Mammary epithelial cell (primary cell): ENCODE measurements at regions of chr14 and their contacts with region 1.

Region 1: DNA sequence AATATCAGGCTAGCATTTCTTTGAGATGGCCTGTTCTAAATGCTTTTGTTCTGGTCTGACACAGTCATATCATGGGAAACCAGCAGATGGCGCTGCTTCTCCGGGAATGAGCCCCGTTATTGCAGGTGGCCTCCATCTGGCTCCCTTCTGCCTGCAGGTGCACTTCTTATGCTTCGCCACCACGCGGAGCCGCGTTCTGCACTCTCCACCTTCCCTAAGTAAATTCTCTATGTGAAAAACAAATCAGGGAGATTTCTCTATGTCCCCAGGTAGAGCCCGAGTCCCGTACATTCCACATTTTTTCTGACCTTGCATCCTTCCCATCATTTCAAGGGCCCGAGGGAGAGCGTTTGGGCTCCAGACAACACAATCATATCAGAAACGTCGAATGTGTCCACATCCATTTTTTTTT is 26.2 kb downstream of the GLRX5 start:
- DNase-seq: peak; percentile 73
- H3K4me3 ChIP-seq: no peak overlapping the region
- H3K27ac ChIP-seq: no peak overlapping the region
- H3K4me1 ChIP-seq: no peaks in the 10 kb centered on the region
- H3K27me3 ChIP-seq: no peaks in the 10 kb centered on the region
- CTCF ChIP-seq: peak; percentile 98 to 99

Region 2: DNA sequence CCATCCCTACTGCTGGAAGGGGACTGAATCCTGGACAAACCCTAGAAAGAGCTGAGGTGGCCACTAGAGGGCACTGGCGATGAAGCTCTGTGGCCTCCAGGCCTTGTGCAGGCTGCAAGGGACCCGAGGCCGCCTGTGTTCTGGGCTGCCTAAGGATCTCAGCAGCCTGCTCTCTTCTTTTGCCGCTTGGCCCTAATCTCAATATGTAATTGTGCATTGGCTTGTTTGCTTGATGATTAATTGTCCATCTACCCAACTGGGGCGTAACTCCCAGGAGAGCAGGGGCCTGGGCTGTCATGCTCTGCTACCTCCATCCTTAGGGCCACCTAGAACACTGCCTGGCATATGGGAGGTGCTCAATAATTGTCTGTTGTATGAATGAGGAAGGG is 118.4 kb before region 1 on chr14:
- CTCF ChIA-PET with region 1: no interaction called
- dilution Hi-C with region 1: no loop called
- in situ Hi-C with region 1: no loop called
- intact Hi-C with region 1: loop called (anchors 1 kb)
- DNase-seq: peak; percentile 56
- H3K4me3 ChIP-seq: no peak overlapping the region
- H3K27ac ChIP-seq: no peak overlapping the region
- H3K4me1 ChIP-seq: no peaks in the 10 kb centered on the region
- H3K27me3 ChIP-seq: no peaks in the 10 kb centered on the region
- CTCF ChIP-seq: peak; percentile 93 to 95

Region 3: GRCh38 chr14:95662376-95663186 is 101.6 kb after region 1 on chr14:
- CTCF ChIA-PET with region 1: no interaction called
- dilution Hi-C with region 1: no loop called
- in situ Hi-C with region 1: no loop called
- intact Hi-C with region 1: no loop called
- DNase-seq: no peak
- H3K4me3 ChIP-seq: no peak overlapping the region
- H3K27ac ChIP-seq: no peak overlapping the region
- H3K4me1 ChIP-seq: no peaks in the 10 kb centered on the region
- H3K27me3 ChIP-seq: no peaks in the 10 kb centered on the region
- CTCF ChIP-seq: no peak

Region 4: GRCh38 chr14:95683793-95684192 is 122.8 kb after region 1 on chr14:
- CTCF ChIA-PET with region 1: no interaction called
- dilution Hi-C with region 1: no loop called
- in situ Hi-C with region 1: loop called in 1 of 2 experiments (anchors 10 kb)
- intact Hi-C with region 1: loop called (anchors 1 kb)
- DNase-seq: no peak
- H3K4me3 ChIP-seq: no peak overlapping the region
- H3K27ac ChIP-seq: no peak overlapping the region
- H3K4me1 ChIP-seq: no peaks in the 10 kb centered on the region
- H3K27me3 ChIP-seq: no peaks in the 10 kb centered on the region
- CTCF ChIP-seq: peak; percentile 73 to 74

Region 5: GRCh38 chr14:95993768-95994592 is 433.0 kb after region 1 on chr14:
- CTCF ChIA-PET with region 1: no interaction called
- dilution Hi-C with region 1: no loop called
- in situ Hi-C with region 1: loop called (anchors 5 to 10 kb)
- intact Hi-C with region 1: loop called (anchors 1 kb)
- DNase-seq: peak; percentile 11
- H3K4me3 ChIP-seq: no peak overlapping the region
- H3K27ac ChIP-seq: no peak overlapping the region
- H3K4me1 ChIP-seq: no peaks in the 10 kb centered on the region
- H3K27me3 ChIP-seq: no peaks in the 10 kb centered on the region
- CTCF ChIP-seq: peak; percentile 67 to 79

Region 6: DNA sequence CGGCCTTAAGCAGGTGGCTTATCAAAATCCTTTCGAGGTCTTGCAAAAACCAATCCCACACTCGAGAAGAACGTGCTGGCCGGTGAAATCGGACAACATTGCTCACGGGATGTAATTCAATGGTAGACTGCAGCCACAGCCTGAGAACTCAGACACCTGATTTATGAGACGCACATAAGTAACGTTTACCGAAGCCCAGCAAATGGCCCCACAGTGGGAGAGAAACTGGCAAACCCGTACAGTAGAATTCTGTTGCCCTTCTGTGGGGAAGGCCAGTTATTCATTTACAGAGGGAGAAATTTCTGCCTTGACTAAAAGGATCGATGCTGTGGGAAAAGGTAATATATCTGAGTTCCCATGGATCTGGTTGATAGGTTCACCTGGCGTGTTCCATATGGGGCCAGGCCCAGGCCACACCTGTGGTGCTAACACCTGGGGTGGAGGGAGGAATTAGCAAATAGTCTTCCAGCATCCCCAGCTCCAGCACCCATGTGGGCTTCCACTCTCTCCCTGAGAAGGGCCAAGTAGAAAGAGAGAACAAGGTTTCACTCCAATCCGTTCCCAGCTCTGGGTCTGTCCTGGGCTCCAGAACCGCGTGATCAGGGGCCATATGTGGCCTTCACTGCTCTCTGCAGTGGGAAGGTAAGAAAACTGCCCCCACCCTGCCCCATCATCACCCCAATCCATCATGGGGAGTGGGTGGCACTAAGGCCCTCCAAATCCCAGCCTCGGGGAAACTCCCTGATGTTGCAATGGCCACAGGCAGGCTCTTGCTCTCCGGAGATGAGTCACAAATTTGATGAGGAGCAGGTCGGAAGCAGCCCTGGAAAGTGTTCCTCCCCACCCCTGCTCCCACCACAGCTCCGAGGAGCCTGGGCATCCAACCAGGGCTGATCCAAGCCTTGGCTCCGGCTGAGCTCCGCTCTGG is 707.7 kb after region 1 on chr14:
- CTCF ChIA-PET with region 1: no interaction called
- dilution Hi-C with region 1: no loop called
- in situ Hi-C with region 1: loop called in 1 of 2 experiments (anchors 25 kb)
- intact Hi-C with region 1: no loop called
- DNase-seq: peak; percentile 99
- H3K4me3 ChIP-seq: no peak overlapping the region
- H3K27ac ChIP-seq: peak overlapping the region; percentile 78
- H3K4me1 ChIP-seq: peaks cover 46% of the 10 kb centered on the region
- H3K27me3 ChIP-seq: no peaks in the 10 kb centered on the region
- CTCF ChIP-seq: no peak

Region 7: DNA sequence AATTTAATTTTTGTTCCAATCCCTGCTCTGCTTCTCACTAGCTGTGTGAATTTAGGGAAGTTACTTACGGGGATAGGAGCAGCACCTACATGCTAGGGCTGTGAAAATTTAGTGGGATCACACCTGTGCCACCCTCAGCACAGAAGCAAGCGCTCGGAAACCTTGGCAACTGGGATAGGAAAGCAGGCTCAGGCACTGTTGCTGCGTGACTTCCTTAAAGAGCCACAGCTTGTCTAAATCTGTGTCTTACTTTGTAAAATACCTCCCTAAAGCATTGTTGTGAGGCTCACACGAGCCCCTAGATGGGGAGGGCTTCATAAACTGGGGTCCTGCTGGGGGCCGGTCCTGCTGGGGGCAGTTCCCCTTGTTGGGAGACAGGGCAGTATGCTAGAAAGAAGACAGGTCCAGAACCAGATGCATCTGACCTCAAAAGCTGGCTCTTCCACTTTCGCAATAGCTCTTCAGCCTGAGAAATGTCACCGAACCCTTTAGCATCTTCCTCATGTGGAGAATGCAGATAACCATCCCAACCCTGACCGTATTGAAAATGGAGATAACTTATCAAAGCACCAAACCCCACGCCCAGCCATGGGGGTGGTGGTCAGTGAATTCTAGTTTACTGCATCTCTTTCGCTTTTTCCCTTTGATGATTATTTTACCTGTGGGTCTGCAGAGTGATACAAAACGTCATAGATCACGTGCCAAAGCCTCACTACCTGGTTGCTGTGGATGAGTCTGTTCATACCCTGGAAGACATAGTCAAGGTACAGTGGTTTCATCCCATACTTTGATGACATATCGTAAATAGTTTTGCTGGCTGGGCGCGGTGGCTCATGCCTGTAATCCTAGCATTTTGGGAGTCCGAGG is 885.1 kb after region 1 on chr14:
- CTCF ChIA-PET with region 1: no interaction called
- dilution Hi-C with region 1: no loop called
- in situ Hi-C with region 1: loop called in 1 of 2 experiments (anchors 25 kb)
- intact Hi-C with region 1: no loop called
- DNase-seq: no peak
- H3K4me3 ChIP-seq: no peak overlapping the region
- H3K27ac ChIP-seq: no peak overlapping the region
- H3K4me1 ChIP-seq: no peaks in the 10 kb centered on the region
- H3K27me3 ChIP-seq: no peaks in the 10 kb centered on the region
- CTCF ChIP-seq: no peak